ENCODE measurements at regions of chr4 and their contacts with region 1.

Region 1: GRCh38 chr4:139734875-139735380 is 69.3 kb downstream of the MGST2 start:
- DNase-seq: peak; percentile 35
- H3K4me3 Mint-ChIP-seq: peak overlapping the region; percentile 28
- H3K27ac Mint-ChIP-seq: no peak overlapping the region
- H3K4me1 Mint-ChIP-seq: peaks cover 6% of the 10 kb centered on the region
- H3K27me3 Mint-ChIP-seq: no peaks in the 10 kb centered on the region
- CTCF ChIP-seq: peak; percentile 52

Region 2: GRCh38 chr4:139163806-139164206 is 571.1 kb before region 1 on chr4:
- CTCF ChIA-PET with region 1: no interaction called
- POLR2A ChIA-PET with region 1: no interaction called
- intact Hi-C with region 1: no loop called
- DNase-seq: no peak
- H3K4me3 Mint-ChIP-seq: no peak overlapping the region
- H3K27ac Mint-ChIP-seq: no peak overlapping the region
- H3K4me1 Mint-ChIP-seq: peaks cover 29% of the 10 kb centered on the region
- H3K27me3 Mint-ChIP-seq: no peaks in the 10 kb centered on the region
- CTCF ChIP-seq: no peak

Region 3: GRCh38 chr4:139825523-139826014 is 90.6 kb after region 1 on chr4:
- CTCF ChIA-PET with region 1: no interaction called
- POLR2A ChIA-PET with region 1: no interaction called
- intact Hi-C with region 1: no loop called
- DNase-seq: no peak
- H3K4me3 Mint-ChIP-seq: no peak overlapping the region
- H3K27ac Mint-ChIP-seq: no peak overlapping the region
- H3K4me1 Mint-ChIP-seq: no peaks in the 10 kb centered on the region
- H3K27me3 Mint-ChIP-seq: no peaks in the 10 kb centered on the region
- CTCF ChIP-seq: no peak

Region 4: GRCh38 chr4:139988863-139989733 is 254.2 kb after region 1 on chr4:
- CTCF ChIA-PET with region 1: interaction called, 3 read pairs
- POLR2A ChIA-PET with region 1: no interaction called
- intact Hi-C with region 1: loop called (anchors 10 kb)
- DNase-seq: peak; percentile 95
- H3K4me3 Mint-ChIP-seq: peak overlapping the region; percentile 6
- H3K27ac Mint-ChIP-seq: peak overlapping the region; percentile 21
- H3K4me1 Mint-ChIP-seq: peaks cover 21% of the 10 kb centered on the region
- H3K27me3 Mint-ChIP-seq: no peaks in the 10 kb centered on the region
- CTCF ChIP-seq: no peak

Measured in MCF 10A (cell line).